ENCODE measurements at regions of chr19 and their contacts with region 1.

Region 1: DNA sequence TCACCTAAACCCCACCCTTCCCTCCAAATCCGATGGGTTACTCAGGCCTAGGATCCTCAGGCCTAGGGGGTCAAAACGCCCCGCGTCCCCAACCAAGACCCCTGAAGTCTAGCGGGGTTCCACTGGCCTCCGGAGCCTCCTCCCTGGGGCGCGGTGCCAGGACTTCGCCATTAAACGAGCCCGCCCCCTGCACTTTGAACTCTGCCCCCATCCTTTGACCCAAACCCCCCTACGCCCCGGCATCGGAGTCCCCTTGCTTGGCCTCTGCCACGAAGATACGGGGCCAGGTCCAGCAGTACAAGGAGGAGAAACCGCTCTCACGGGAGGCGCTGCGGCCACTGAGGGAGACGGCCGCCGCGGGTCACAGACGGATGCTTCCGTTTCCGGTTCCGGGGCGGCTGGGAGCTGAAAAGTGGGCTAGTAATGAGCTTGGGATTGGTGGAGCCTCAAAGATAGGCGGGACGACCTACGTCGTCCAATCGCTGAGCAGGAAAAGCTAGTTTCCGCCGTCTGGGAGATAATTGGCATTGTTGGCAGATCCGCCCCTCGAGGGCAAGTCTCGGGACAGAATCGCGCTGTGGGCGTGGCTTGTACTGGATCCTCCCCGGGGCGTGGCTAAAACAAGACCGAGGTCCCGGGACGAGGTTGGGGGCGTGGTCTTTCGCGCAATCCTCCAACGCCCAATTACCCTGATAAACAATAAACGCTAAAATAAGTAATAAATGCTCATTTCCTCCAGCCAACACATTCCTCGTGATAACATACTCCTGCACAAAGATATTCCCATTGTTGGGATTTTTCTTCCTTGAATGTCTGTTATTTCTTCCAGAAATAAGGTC is 5.7 kb upstream of the ZNF77 start:
- DNase-seq: peak; percentile 99
- H3K4me3 ChIP-seq: peak overlapping the region; percentile 88
- H3K27ac ChIP-seq: peak overlapping the region; percentile 73
- H3K27me3 ChIP-seq: no peaks in the 10 kb centered on the region
- CTCF ChIP-seq: no peak

Region 2: GRCh38 chr19:2827840-2828489 is 122.5 kb before region 1 on chr19:
- CTCF ChIA-PET with region 1: no interaction called
- POLR2A ChIA-PET with region 1: no interaction called
- DNase-seq: no peak
- H3K4me3 ChIP-seq: no peak overlapping the region
- H3K27ac ChIP-seq: no peak overlapping the region
- H3K27me3 ChIP-seq: no peaks in the 10 kb centered on the region
- CTCF ChIP-seq: no peak

Region 3: GRCh38 chr19:2900296-2901252 is 49.9 kb before region 1 on chr19 and contains the start of gene ZNF57:
- CTCF ChIA-PET with region 1: interaction called, 4 read pairs
- POLR2A ChIA-PET with region 1: interaction called, 13 read pairs
- DNase-seq: peak; percentile 97
- H3K4me3 ChIP-seq: peak within 1 kb of the TSS; percentile 95
- H3K27ac ChIP-seq: peak within 1 kb of the TSS; percentile 52
- H3K27me3 ChIP-seq: no peaks in the 10 kb centered on the region
- CTCF ChIP-seq: no peak
- polyA plus RNA-seq, gene ZNF57: 2.3 and 2.4 TPM in 2 replicates

Region 4: DNA sequence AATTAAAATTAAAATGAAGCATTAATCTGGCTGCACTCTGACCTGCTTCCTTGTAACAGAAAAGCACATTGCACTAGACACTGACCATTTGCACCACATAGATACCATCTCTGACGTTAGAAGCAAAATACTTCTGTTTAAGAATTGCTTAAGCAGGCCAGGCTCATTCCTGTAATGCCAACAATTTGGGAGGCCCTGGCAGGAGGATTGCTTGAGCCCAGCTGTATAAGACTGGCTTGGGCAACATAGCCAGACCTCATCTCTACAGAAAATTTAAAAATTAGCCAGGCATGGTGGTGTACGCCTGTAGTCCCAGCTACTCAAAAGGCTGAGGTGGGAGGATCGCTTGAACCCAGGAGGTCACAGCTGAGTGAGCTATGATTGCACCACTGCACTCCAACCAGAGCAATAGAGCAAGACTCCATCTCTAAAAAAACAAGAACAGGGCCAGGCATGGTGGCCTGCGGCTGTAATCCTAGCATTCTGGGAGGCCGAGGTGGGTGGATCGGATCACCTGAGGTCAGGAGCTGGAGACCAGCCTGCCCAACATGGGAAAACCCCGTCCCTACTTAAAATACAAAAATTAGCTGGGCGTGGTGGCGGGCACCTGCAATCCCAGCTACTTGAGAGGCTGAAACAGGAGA is 19.8 kb after region 1 on chr19:
- CTCF ChIA-PET with region 1: interaction called, 13 read pairs
- POLR2A ChIA-PET with region 1: no interaction called
- DNase-seq: no peak
- H3K4me3 ChIP-seq: no peak overlapping the region
- H3K27ac ChIP-seq: no peak overlapping the region
- H3K27me3 ChIP-seq: no peaks in the 10 kb centered on the region
- CTCF ChIP-seq: no peak

Region 5: DNA sequence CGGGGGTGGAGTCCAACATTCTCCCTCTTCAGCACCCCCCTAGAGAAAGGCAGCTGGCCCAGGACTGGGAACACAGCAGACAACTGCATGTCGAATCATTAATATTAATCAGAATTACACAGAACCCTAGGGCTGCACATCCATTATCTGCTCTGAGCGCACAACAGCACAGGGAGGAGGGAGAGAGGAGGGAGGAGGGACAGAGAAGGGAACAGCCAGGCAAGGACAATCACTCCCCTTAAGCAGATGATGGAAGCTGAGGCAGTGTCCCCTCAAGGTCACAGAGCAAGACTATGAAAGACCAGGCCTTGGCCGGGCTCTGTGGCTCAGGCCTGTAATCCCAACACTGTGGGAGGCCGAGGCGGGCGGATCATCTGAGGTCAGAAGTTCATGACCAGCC is 52.5 kb after region 1 on chr19:
- CTCF ChIA-PET with region 1: no interaction called
- POLR2A ChIA-PET with region 1: no interaction called
- DNase-seq: no peak
- H3K4me3 ChIP-seq: no peak overlapping the region
- H3K27ac ChIP-seq: no peak overlapping the region
- H3K27me3 ChIP-seq: no peaks in the 10 kb centered on the region
- CTCF ChIP-seq: no peak

Region 6: DNA sequence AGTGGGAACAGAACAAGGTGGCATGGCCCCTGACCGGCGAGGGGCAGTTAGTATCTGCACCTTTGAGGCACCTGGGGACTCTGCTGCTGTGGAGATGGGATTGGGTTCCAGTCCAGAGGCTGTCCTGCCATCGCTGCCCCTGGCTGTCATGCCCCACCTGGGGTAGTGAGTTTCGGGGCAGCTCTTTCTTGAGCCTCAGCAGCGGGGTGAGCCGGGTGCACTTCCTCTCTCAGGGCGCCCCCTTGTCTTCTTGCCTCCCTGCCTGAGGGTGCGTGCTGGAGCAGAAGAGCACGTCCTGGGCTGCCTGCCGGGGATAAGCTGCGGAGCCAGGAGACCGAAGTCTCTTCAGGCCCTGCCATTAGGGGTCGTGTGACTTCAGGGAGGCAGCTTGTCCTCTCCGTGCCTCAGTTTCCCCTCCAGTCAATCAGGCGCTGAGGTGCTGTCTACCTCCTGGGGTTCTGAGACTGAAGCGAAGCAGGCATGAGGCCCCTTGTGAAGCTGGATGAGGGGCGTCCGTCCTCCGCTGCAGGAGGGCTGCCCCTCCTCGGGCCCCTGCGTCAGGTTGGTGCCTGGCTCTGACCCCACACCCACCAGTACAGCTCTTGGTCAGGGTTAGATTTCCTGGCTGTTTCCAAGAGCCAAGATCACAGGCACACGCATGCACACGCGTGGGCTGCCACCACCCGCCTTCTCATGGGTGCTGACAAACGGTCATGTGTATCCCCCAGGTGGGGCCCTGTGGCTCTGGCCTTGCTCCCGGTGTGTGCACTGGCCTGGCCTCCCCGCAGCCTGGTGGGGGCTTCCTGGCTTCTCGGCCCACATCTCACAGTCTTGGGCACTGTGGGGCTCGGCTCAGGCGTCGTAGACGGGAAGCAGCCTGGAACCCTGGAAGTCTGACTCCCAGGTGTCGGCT is 152.0 kb after region 1 on chr19:
- CTCF ChIA-PET with region 1: interaction called, 50 read pairs
- POLR2A ChIA-PET with region 1: interaction called, 11 read pairs
- DNase-seq: no peak
- H3K4me3 ChIP-seq: no peak overlapping the region
- H3K27ac ChIP-seq: no peak overlapping the region
- H3K27me3 ChIP-seq: no peaks in the 10 kb centered on the region
- CTCF ChIP-seq: no peak

Region 7: GRCh38 chr19:3125900-3126524 is 175.5 kb after region 1 on chr19:
- CTCF ChIA-PET with region 1: interaction called, 13 read pairs
- POLR2A ChIA-PET with region 1: no interaction called
- DNase-seq: no peak
- H3K4me3 ChIP-seq: no peak overlapping the region
- H3K27ac ChIP-seq: no peak overlapping the region
- H3K27me3 ChIP-seq: no peaks in the 10 kb centered on the region
- CTCF ChIP-seq: peak; percentile 67

Measured in AG04450 (cell line).